Testis (tissue), 5 donors: ENCODE measurements at regions of chr10 and their contacts with region 1.

Region 1: DNA sequence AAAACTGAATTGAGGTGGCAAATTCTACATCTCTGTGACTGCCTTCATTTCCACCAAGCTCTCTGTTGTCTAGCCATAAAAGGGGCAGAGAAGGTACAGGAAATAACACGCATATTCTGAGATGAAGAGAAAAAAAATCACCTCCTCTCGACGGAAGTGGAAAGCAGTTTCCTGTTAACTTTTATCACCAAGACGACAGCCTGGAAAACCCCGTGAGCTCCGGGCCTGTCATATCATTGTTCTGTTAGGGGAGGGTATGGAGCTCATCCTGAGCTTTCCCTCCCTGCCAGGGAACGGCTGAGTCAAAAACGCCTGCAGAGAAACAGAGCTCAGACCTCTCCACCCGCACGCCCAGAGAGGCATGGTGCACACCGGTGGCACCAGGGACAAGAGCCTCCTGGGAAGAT is 200.3 kb downstream of the PRPF18 start:
- DNase-seq: no peak
- H3K4me3 ChIP-seq: no peak overlapping the region
- H3K27ac ChIP-seq: peak overlapping the region in 1 of 2 donors; percentile 13
- H3K4me1 ChIP-seq: peaks cover 3% of the 10 kb centered on the region
- H3K27me3 ChIP-seq: no peaks in the 10 kb centered on the region
- CTCF ChIP-seq: no peak
- POLR2A ChIP-seq: no peak

Region 2: DNA sequence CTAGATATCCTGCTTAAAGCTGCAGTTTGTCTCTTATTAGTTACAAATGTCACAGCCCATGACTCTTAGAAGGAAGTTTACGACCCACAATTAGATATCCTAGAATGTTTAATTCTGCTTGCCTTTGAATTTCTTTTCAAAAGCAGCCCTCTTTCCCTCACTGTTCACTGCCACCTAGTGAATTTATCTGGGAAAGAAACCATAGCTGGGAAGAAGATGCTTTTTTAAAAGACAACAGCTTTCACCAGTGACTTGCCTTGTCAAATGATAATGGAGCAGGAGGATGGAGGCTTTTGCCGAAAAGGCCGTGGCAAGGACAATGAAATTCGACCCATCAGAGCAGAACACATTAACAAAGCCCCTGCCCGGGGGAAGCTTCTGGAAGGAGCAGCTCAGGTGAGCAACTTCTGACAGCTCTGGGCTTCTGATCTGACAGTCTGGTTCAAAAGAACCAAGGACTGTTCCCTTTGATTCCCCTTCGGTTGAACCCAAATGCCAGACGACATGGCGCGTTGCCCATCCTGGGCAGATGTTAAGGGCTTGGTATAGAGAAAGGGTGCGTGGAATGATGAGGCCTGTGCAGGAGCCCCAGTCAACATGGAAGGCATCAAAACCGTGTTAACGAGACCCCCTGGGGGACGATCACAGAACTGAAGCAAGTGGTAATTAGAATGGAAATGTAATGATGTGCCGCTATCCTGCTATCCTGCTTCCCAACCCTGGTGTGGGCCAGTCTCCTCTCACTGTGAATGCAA is 306.9 kb after region 1 on chr10:
- intact Hi-C with region 1: loop called (anchors 5 kb)
- DNase-seq: no peak
- H3K4me3 ChIP-seq: no peak overlapping the region
- H3K27ac ChIP-seq: no peak overlapping the region
- H3K4me1 ChIP-seq: no peaks in the 10 kb centered on the region
- H3K27me3 ChIP-seq: no peaks in the 10 kb centered on the region
- CTCF ChIP-seq: peak in 1 of 3 experiments; percentile 43
- POLR2A ChIP-seq: no peak